PC-3 (cell line): ENCODE measurements at regions of chr16 and their contacts with region 1.

Region 1: DNA sequence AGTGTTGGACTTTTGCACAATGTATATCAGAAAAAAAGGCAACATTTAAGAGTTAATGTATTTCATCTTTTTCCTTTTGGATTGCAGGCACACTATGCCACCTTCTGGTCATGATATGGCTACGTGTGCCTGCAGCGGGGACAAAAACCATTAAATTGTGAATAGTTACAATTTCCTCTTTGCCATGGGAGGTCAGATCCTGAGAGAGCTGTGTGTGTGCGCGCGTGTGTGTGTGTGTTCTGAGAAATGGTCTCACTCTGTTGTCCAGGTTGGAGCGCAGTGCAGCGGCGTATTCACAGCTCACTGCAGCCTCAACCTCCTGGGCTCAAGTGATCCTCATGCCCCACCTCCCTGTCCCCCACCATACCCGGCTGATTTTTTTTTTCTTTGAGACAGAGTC is 4.3 kb upstream of the SGF29 start:
- DNase-seq: peak; percentile 58
- ATAC-seq: peak; percentile 33; the same call in 1 of the 2 replicates
- H3K4me3 ChIP-seq: no peak overlapping the region
- H3K27ac ChIP-seq: no peak overlapping the region
- H3K4me1 ChIP-seq: 0 out of 2 replicates have a peak, but pooled peaks cover under 1% of the 10 kb centered on the region
- H3K27me3 ChIP-seq: no peaks in the 10 kb centered on the region
- CTCF ChIP-seq: peak; percentile 74

Region 2: DNA sequence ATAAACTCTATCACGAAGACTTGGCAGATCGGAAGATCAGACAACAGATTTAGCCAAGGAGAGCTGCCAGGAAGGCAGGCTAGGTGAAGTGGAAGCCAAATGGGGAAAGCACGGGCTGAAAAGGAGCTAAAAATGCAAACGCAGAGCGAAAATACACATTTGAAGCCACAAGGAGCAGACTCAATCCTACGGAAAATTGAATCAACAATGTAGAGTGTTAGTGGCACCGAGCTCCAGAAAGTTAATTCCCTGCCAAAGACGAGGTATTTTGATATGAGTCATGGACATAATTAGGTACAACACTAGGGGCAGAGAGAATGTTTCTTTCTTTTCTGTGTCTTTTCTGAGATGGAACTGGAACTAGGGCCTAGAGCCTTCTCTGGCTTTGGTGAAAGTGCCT is 506.6 kb before region 1 on chr16:
- CTCF ChIA-PET with region 1: no interaction called
- POLR2A ChIA-PET with region 1: no interaction called
- intact Hi-C with region 1: no loop called
- DNase-seq: no peak
- ATAC-seq: no peak
- H3K4me3 ChIP-seq: no peak overlapping the region
- H3K27ac ChIP-seq: no peak overlapping the region
- H3K4me1 ChIP-seq: no peaks in the 10 kb centered on the region
- H3K27me3 ChIP-seq: peaks cover 6% of the 10 kb centered on the region; the same call in 1 of the 2 replicates
- CTCF ChIP-seq: no peak

Region 3: DNA sequence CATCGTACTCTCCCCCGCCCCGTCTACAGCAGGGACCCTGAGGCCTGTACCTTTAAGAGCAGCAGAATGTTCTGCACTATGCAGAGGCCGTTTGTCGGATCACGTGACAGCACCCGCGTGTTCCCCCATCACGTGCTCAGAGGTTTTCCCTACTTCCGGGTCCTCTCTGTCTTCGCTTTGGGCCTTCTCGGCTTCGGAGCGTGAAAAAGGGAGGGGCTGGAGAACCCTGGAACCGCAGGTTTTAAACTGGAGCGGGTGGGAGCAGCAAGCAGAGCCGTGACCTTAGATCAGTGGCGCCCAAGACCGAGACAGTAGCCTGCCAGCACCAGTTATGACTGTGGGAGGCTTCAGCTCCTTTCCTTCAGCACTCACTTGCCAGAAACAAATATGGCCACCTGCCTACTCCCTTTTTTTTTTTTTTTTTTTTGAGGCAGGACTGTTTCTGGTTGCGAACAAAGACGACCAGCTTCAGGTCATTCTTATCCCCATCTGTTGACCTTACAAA is 57.4 kb before region 1 on chr16 and contains the start of gene CLN3:
- CTCF ChIA-PET with region 1: no interaction called
- POLR2A ChIA-PET with region 1: no interaction called
- intact Hi-C with region 1: loop called (anchors 2 kb)
- DNase-seq: peak; percentile 82
- ATAC-seq: peak; percentile 96
- H3K4me3 ChIP-seq: peak within 1 kb of the TSS; percentile 99
- H3K27ac ChIP-seq: peak within 1 kb of the TSS; percentile 89
- H3K4me1 ChIP-seq: no peaks in the 10 kb centered on the region
- H3K27me3 ChIP-seq: no peaks in the 10 kb centered on the region
- CTCF ChIP-seq: no peak
- total RNA-seq, gene CLN3: 10.7 and 13.3 TPM in 2 replicates

Region 4: DNA sequence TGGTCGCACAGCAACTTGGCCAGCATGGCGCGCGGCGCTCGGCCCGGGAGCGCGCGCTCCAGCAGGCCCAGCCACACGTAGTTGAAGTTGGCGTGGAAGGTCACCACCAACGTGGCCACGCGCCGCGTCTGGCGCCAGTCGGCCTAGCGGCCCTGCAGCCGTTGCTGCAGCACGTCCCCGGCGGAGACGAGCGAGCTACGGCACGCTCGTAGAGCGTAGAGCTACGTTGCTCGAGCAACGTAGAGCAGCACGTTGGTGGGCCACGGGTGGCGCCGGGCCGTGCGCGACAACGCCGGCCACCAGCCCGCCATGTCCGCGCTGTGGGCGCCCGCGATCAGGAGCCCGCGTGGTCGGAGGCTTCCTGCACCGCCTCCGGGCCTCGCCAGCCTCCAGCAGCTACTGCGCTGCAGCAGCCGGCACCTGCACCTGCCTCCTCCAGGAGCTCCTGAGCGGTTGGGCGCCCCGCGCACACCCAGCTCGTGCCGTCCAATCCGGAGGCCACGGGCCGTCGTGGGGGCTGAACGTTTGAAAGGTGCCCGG is 73.9 kb after region 1 on chr16:
- CTCF ChIA-PET with region 1: no interaction called
- POLR2A ChIA-PET with region 1: no interaction called
- intact Hi-C with region 1: no loop called
- DNase-seq: peak; percentile 67
- ATAC-seq: peak; percentile 97
- H3K4me3 ChIP-seq: peak overlapping the region; percentile 63
- H3K27ac ChIP-seq: no peak overlapping the region
- H3K4me1 ChIP-seq: no peaks in the 10 kb centered on the region
- H3K27me3 ChIP-seq: no peaks in the 10 kb centered on the region
- CTCF ChIP-seq: no peak